ENCODE measurements at regions of chr17 and their contacts with region 1.

Region 1: DNA sequence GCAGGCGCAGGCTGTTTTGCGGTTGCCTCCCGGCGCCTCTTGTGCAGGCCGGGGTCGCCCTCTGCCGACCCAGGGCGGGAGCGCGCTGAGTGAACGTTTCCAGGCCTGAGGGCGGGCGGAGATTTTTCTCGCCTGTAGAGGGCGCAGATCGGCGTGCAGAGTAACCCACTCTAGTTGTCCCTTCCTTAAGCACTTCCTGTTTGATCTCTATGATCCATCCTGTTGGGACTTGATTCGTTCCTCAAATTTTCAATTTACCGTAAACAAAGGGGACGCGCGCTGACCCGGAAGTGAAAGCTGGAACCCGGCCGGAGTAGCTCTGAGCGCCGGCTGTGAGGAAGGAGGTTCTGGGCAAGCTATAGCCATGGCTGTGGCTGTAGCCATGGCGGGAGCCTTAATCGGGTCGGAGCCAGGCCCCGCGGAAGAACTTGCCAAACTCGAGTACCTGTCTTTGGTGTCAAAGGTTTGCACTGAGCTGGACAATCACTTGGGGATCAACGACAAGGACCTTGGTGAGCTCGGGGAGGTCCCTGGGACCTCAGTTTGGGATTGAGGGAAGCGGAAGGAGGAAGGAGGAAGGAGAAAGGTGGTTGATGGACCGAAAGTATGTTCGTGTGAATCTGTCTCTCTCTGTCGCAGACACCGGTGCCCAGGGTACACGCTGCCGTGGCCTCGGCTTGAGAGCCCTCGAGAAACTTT is at the start of gene DHX8:
- DNase-seq: peak; percentile 99
- ATAC-seq: peak; percentile 99
- total RNA-seq, gene DHX8: 40.9 TPM

Region 2: GRCh38 chr17:43393944-43394482 is 89.8 kb before region 1 on chr17:
- intact Hi-C with region 1: loop called (anchors 2 kb)
- DNase-seq: peak; percentile 97
- ATAC-seq: peak; percentile 65

Region 3: DNA sequence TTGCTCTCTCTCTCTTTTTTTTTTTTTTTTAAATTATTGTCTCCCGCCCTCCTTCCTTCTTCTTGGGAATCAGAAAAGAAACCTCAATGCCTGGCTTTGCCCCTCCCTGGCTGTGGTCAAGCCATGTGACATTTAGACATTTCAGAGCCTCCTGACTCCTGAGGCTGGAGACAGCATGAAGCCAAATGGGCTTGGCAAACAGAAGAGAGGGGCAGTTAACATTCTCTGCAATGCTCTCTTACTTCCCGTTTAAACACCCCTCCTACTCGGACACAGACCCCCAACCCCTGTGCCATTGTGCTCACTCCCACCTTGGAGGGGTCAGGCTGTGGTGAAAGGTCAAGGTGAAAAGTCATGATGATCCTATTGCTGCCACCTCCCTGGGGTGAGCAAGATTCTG is 192.6 kb after region 1 on chr17:
- intact Hi-C with region 1: no loop called
- DNase-seq: no peak
- ATAC-seq: peak; percentile 52